ENCODE measurements at regions of chr22 and their contacts with region 1.

Region 1: DNA sequence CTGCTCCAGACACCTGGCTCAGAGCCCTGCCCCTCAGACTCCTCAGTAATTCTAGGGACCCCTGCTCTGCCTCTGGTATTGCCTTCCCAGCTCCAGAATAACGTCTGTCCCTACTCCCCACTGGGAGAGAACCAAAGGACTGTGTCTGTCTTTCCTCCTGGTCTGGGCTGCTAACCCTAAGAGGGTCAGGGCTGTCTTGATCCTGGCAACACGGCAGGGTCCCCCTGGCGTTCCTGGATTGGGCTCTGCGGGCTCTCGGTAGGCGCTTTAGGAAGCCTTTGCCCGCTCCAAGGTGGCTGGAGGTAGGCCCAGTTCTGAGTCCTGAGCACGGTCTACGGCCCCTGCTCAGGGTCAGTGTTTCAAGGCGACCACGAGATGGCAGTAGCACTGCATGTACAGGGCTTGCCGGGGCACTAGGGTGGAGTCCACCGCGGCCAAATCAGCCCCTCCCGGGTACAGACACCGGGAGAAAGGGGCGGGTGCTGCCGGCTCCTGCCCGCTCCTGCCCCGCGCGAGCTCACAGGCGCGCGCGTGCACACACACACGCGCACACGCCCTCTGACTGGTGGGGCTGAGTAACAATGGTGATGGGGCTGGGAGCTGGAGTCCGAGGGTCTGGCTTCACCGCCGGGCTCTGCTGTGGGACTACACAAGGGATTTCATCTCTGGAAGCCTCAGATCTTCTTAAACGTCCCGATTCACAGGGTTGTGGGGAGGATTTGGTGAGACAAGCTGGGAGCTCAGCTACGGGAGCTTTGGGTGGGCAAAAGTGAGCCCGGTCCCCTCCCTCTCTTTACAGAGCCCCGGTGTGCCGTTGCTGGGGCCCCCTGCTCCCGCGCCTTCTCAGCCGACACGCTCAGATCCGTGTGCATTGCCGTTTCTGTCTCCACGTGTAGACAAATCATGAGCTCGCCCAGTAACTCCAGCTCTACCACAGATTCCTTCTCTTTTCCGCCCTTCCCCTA is 30.1 kb upstream of the HMOX1 start:
- DNase-seq: peak; percentile 75 to 92
- H3K4me3 ChIP-seq: peak overlapping the region; percentile 67
- H3K27ac ChIP-seq: peak overlapping the region; percentile 33
- H3K4me1 ChIP-seq: peaks cover 12% of the 10 kb centered on the region
- H3K27me3 ChIP-seq: no peaks in the 10 kb centered on the region
- CTCF ChIP-seq: peak; percentile 83

Region 2: DNA sequence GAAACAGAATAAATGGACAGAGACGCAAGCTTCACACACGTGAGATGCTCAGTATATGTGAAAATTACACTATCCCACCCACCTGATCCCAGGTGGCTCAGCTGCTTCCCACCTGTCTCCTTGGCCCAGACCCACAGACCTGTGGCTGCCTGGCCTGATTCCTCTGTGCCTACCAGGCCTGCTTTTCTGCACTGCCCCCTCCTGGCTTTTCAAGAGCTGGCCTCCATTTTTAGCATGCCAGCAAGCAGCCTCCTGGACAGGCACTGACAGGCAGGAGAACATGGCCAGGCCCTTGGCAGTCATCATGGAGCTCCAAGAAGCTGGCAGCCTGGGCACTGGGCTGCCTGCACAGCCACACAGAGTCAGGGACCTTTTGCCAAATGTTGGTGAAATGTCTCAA is 173.0 kb before region 1 on chr22:
- CTCF ChIA-PET with region 1: no interaction called
- POLR2A ChIA-PET with region 1: no interaction called
- intact Hi-C with region 1: no loop called
- DNase-seq: no peak
- H3K4me3 ChIP-seq: no peak overlapping the region
- H3K27ac ChIP-seq: no peak overlapping the region
- H3K4me1 ChIP-seq: no peaks in the 10 kb centered on the region
- H3K27me3 ChIP-seq: peaks cover 22% of the 10 kb centered on the region
- CTCF ChIP-seq: no peak

Region 3: DNA sequence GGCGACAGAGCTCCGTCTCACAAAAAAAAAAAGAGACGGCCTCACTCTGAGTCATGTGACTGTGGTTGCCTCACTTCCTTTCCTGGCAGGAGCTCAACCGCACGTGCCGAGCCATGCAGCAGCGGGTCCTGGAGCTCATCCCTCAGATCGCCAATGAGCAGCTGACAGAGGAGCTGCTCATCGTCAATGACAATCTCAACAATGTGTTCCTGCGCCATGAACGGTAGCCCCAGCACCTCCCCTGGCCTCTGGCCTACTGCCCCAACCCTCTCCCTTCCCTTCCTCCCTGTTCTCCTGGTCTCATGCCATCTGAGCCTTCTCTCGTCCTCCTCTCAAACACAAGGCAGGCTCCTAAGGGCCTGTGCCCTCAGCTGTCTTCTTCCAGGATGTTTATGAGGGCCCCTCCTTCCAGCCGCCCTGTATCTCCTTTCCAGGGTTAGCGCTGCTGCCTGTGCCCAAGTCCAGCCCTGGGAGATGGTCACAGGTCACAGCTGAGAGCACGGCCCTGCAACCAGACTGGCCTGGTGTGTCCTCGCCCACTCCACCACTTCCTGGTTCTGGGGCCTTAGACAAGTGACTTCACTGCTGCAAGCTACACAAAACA is 20.5 kb before region 1 on chr22:
- CTCF ChIA-PET with region 1: interaction called, 10 read pairs
- POLR2A ChIA-PET with region 1: no interaction called
- intact Hi-C with region 1: no loop called
- DNase-seq: peak in 1 of 2 experiments; percentile 54
- H3K4me3 ChIP-seq: no peak overlapping the region
- H3K27ac ChIP-seq: no peak overlapping the region
- H3K4me1 ChIP-seq: 0 out of 2 replicates have a peak, but pooled peaks cover 3% of the 10 kb centered on the region
- H3K27me3 ChIP-seq: no peaks in the 10 kb centered on the region
- CTCF ChIP-seq: no peak

Region 4: DNA sequence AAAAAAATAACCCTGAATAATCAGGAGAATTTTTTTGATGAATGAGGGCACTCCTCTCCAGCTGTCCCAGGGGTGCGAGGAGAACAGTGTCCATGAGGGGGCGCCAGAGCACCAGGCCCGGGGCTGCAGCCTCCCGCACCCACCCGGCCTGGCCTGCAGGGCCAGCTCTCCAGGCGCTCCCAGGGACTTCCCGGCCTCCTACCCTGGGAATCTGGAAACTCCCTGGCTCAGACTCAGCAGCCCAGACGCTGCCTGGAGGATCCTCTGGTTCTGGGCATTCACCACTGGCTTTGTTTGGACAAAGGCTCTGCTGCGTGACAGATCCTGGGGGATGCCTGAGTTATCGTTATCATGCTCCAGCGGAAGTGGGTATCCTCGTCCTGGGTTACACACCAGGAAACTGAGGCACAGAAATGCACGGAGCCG is 80.1 kb after region 1 on chr22:
- CTCF ChIA-PET with region 1: interaction called, 14 read pairs
- POLR2A ChIA-PET with region 1: interaction called, 3 read pairs
- intact Hi-C with region 1: loop called (anchors 1 kb)
- DNase-seq: peak; percentile 75 to 93
- H3K4me3 ChIP-seq: no peak overlapping the region
- H3K27ac ChIP-seq: no peak overlapping the region
- H3K4me1 ChIP-seq: peaks cover 24% of the 10 kb centered on the region
- H3K27me3 ChIP-seq: no peaks in the 10 kb centered on the region
- CTCF ChIP-seq: peak; percentile 98

Region 5: GRCh38 chr22:35589071-35589952 is 238.5 kb after region 1 on chr22:
- CTCF ChIA-PET with region 1: interaction called, 3 read pairs
- POLR2A ChIA-PET with region 1: no interaction called
- intact Hi-C with region 1: loop called (anchors 1 kb)
- DNase-seq: peak; percentile 96 to 100
- H3K4me3 ChIP-seq: peak overlapping the region; percentile 62; the same call in 1 of the 2 replicates
- H3K27ac ChIP-seq: peak overlapping the region; percentile 98
- H3K4me1 ChIP-seq: peaks cover 90% of the 10 kb centered on the region
- H3K27me3 ChIP-seq: no peaks in the 10 kb centered on the region
- CTCF ChIP-seq: no peak

Region 6: GRCh38 chr22:35785181-35785923 is 434.5 kb after region 1 on chr22:
- CTCF ChIA-PET with region 1: no interaction called
- POLR2A ChIA-PET with region 1: interaction called, 3 read pairs
- intact Hi-C with region 1: loop called (anchors 10 kb)
- DNase-seq: no peak
- H3K4me3 ChIP-seq: no peak overlapping the region
- H3K27ac ChIP-seq: peak overlapping the region; percentile 94
- H3K4me1 ChIP-seq: peaks cover 34% of the 10 kb centered on the region
- H3K27me3 ChIP-seq: no peaks in the 10 kb centered on the region
- CTCF ChIP-seq: no peak

Region 7: DNA sequence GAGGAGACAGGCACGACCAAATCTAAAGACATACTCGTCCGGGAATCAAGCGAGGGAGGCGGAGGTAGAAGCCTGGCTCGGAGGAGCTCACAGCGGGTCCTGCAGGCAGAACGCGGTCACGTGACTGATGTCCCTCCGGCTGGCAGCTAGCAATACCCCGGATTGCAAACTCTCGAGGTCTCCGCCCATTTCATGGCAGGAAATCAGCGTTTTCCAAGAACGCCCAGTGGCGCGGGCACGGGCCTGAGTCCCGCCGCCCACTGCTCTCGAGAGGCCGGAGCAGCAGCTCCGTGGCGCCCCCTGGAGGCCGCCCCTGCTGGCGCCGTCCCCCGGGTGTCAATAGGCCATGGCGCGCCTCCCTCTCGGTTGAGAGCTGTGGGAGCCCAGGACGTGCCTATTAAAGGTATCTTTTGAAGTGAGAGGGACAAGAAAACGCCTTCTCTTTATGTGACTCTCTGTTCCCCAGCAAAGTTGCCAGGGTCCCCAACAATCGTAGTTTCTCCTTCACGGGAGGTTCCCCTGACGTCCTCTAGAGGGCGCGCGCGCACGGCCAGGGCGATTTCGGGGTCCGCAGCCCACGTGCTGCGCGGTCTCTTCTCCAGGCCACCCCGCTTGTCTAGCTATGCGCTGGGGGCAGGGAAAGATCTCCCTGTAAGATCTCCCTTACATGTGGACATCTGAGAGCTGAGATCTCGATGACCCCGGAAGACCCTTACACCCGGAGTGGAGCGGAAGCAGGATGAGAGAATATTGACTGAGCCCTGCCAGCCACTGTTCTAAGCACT is 715.1 kb after region 1 on chr22:
- CTCF ChIA-PET with region 1: interaction called, 4 read pairs
- POLR2A ChIA-PET with region 1: no interaction called
- intact Hi-C with region 1: loop called (anchors 5 kb)
- DNase-seq: peak; percentile 88 to 95
- H3K4me3 ChIP-seq: peak overlapping the region; percentile 76
- H3K27ac ChIP-seq: peak overlapping the region; percentile 71
- H3K4me1 ChIP-seq: peaks cover 12% of the 10 kb centered on the region
- H3K27me3 ChIP-seq: no peaks in the 10 kb centered on the region
- CTCF ChIP-seq: peak; percentile 100

Measured in PC-9 (cell line).